A549 (cell line): ENCODE measurements at regions of chr17 and their contacts with region 1.

Region 1: DNA sequence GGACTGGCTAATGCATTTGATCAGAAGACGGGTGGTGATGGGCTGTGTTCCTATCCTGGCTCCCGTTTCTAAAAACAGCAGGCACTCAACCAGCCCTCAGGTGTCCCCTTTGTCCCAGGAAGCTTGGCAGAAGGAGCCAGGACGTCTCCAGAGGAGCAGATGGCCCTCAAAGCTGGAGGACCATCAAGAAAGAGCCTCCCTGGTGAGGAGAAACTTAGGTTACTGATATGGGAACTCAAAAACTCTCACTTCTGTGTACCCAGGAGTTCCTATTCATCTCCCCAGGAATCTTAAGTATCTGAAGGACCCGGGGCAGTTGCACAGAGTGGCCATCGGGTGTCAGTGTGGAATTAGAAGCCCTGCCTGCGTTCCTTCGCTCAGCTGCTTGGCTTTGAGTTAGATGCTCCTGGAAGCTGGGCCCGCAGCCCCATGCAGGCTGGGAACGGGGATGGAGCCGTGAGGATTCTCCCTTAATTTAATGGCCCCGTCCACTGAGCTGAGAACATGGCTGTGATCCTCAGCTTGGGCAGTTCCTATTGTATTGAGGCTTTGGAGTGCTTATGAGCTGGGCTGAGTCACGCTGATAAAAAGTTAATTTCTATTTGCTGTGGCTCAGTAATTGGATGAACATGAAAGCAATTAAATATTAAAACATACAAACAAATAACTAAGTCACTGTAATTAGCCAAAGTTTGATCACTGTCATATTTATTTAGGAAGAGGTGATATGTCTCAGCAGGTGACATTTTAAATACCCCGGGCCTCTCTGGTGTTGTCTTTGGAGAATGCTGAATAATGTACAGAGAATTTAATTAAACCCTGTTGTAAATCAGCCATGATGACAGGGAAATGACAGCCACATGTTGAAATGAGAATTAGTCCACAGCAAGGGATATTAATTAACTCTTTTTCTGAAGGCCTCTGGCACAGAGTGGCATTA is 402.1 kb downstream of the SEC14L1 start:
- DNase-seq: peak; percentile 88 to 91
- ATAC-seq: peak; percentile 95 to 97
- H3K4me3 ChIP-seq: no peak overlapping the region
- H3K27ac ChIP-seq: peak overlapping the region; percentile 10 to 48; a peak in 1 of 6 replicates
- H3K4me1 ChIP-seq: peaks cover 16% of the 10 kb centered on the region
- CTCF ChIP-seq: peak; percentile 97
- EP300 ChIP-seq: no peak
- POLR2A ChIP-seq: no peak
- RAD21 ChIP-seq: peak; percentile 99 to 100

Region 2: DNA sequence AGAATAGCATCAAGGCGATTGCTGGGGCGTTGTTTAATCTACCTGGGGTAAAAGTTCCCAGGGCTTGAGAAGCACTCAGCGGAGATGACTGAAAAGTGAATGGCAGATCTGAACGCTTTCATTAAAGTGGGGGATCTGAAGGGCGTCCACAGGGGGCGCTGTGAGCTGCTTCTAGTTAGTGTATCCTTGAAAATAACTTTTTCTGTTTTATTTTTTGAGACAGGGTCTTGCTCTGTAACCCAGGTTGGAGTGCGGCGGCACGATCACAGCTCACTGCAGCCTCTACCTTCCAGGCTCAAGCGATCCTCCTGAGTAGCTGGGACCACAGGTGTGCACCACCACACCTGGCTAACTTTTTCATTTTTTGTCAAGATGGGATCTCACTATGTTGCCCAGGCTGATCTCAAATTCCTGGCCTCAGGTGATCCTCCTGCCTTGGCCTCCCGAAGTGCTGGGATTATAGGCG is 41.7 kb before region 1 on chr17:
- CTCF ChIA-PET with region 1: no interaction called
- POLR2A ChIA-PET with region 1: no interaction called
- DNase-seq: peak; percentile 55 to 57
- ATAC-seq: 0 out of 6 replicates have a peak, but pooled peaks of 1 of the 2 experiments have one; percentile 17
- H3K4me3 ChIP-seq: no peak overlapping the region
- H3K27ac ChIP-seq: no peak overlapping the region
- H3K4me1 ChIP-seq: no peaks in the 10 kb centered on the region
- CTCF ChIP-seq: peak; percentile 61
- EP300 ChIP-seq: no peak
- POLR2A ChIP-seq: no peak
- RAD21 ChIP-seq: peak; percentile 23 to 48; a peak in 2 of 5 replicates

Region 3: DNA sequence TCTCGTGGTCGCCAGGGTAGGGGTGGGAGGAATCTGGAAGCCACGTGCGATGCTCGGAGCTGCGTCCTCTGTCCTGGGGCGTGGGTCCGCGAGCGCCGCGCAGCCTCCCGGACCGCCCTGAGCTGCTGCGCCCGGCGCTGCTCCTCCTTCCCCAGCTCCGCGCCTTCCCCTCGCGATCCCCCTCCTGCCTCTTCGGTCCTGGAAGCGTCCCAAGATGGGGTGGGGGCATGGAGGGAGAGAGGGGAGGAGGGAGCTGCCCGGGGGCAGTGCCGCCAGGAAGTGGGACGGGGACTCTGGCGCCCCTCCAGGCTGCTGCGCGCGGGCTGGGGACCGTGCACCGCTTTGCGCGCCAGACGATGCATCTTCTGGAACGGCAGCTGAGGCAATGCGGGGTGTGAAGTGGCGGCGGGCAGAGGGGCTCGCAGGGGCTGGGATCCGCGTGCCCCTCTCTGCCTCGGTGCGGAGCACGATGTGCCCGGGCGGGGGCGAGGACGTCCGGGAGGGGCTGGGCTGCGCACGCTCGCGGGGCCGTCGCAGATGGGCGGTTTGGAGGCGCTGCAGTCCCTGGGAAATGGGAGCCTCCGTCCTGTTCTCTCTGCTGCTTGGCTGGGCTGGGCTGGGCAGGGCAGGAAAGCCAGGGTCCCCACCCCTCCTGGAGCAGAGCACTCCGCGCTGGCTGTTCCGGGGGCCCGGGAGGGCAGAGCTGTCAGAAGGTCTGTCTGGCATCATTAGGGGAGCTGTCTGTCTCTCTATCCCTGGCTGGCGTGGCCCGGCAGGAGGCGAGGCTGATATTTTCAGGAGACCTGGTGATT is 14.1 kb before region 1 on chr17:
- CTCF ChIA-PET with region 1: interaction called, 36 read pairs
- POLR2A ChIA-PET with region 1: no interaction called
- DNase-seq: no peak
- ATAC-seq: peak; percentile 74 to 83
- H3K4me3 ChIP-seq: peak overlapping the region; percentile 41
- H3K27ac ChIP-seq: peak overlapping the region; percentile 33 to 73; a peak in 4 of 6 replicates
- H3K4me1 ChIP-seq: 0 out of 3 replicates have a peak, but pooled peaks cover 5% of the 10 kb centered on the region
- CTCF ChIP-seq: no peak; the same call in 2 of the 3 replicates
- EP300 ChIP-seq: no peak
- POLR2A ChIP-seq: no peak
- RAD21 ChIP-seq: no peak

Region 4: DNA sequence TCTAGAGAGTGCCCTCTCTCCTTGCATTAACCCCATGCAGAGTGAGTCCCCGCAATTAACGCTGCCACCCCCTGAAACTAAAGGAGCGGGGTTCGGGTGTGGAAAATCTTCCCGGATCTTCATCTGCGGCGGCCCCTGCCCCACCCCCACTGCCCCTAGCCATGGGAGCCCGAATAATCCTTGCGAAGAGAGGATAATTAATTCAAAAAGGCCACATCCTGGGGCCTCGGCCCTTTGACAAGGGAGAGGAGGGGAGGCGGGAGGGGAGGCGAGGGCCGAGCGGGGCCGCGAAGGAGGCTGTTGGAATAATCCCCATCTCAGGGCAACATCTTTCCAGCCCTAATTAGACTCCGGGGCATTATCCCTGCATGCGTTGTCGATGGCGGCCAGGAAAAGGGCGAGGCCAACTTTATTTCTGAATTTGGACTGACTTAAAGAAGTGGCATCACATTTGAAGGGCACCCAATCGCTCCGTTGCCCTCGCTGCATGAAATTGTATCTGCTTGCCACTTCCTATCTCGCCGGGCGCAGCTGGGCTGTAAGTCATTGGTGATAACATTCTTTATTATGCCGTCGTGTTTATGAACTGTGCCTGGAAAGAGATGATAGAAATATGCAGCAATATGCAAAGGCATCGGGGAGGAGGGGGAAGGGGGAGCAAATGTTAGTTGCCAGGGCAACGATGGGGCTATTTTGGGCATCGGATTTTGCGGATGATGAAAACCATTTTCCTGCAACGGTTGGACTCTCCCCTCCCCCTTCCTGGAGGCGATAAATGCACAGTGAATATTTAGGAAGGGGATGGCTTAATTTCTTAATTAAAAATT is 28.5 kb after region 1 on chr17:
- CTCF ChIA-PET with region 1: interaction called, 11 read pairs
- POLR2A ChIA-PET with region 1: no interaction called
- DNase-seq: no peak
- ATAC-seq: no peak
- H3K4me3 ChIP-seq: no peak overlapping the region
- H3K27ac ChIP-seq: no peak overlapping the region
- H3K4me1 ChIP-seq: peaks cover 12% of the 10 kb centered on the region; the same call in 1 of the 3 replicates
- CTCF ChIP-seq: no peak
- EP300 ChIP-seq: no peak
- POLR2A ChIP-seq: no peak
- RAD21 ChIP-seq: no peak

Region 5: DNA sequence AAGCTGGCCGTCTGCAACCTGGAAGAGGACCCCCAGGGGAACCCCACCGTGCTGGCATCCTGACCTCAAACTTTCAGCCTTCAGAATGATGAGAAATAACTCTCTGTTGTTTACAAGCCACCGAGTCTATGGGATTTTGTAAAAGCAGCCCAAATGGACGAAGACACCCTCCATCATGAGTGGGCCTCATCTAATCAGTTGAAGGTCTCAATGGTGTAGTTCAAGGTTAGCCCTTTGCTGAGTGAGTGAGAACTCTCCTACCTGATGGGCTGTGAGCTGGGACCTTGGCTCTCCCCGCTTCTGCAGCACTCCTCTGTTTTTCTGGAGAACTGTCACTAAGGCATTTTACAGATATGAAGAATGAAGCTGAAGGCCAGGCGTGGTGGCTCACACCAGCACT is 89.8 kb after region 1 on chr17:
- CTCF ChIA-PET with region 1: interaction called, 10 read pairs
- POLR2A ChIA-PET with region 1: no interaction called
- DNase-seq: no peak
- ATAC-seq: no peak
- H3K4me3 ChIP-seq: no peak overlapping the region
- H3K27ac ChIP-seq: no peak overlapping the region
- H3K4me1 ChIP-seq: no peaks in the 10 kb centered on the region
- CTCF ChIP-seq: no peak
- EP300 ChIP-seq: no peak
- POLR2A ChIP-seq: no peak
- RAD21 ChIP-seq: no peak

Region 6: GRCh38 chr17:77887464-77888241 is 344.8 kb after region 1 on chr17:
- CTCF ChIA-PET with region 1: interaction called, 10 read pairs
- POLR2A ChIA-PET with region 1: no interaction called
- DNase-seq: peak; percentile 64 to 68
- ATAC-seq: peak; percentile 63 to 65
- H3K4me3 ChIP-seq: peak overlapping the region; percentile 49
- H3K27ac ChIP-seq: peak overlapping the region; percentile 15 to 73; a peak in 4 of 6 replicates
- H3K4me1 ChIP-seq: peaks cover 20% of the 10 kb centered on the region; the same call in 2 of the 3 replicates
- CTCF ChIP-seq: no peak
- EP300 ChIP-seq: no peak
- POLR2A ChIP-seq: no peak
- RAD21 ChIP-seq: no peak; a peak in 1 of 5 replicates

Region 7: GRCh38 chr17:78019367-78019975 is 476.6 kb after region 1 on chr17:
- CTCF ChIA-PET with region 1: interaction called, 316 read pairs
- POLR2A ChIA-PET with region 1: no interaction called
- DNase-seq: peak in 1 of 2 experiments; percentile 53
- ATAC-seq: peak in 1 of 2 experiments; percentile 70; a peak in 3 of 6 replicates
- H3K4me3 ChIP-seq: no peak overlapping the region
- H3K27ac ChIP-seq: no peak overlapping the region
- H3K4me1 ChIP-seq: no peaks in the 10 kb centered on the region
- CTCF ChIP-seq: peak; percentile 86
- EP300 ChIP-seq: no peak
- POLR2A ChIP-seq: no peak
- RAD21 ChIP-seq: peak; percentile 77 to 82